ENCODE measurements at regions of chr3 and their contacts with region 1.

Region 1: GRCh38 chr3:170346481-170347392 is 10.8 kb upstream of the SKIL start:
- DNase-seq: no peak
- H3K4me3 ChIP-seq: no peak overlapping the region
- H3K27ac ChIP-seq: no peak overlapping the region
- H3K4me1 ChIP-seq: no peaks in the 10 kb centered on the region
- H3K27me3 ChIP-seq: no peaks in the 10 kb centered on the region
- CTCF ChIP-seq: no peak
- POLR2A ChIP-seq: no peak

Region 2: DNA sequence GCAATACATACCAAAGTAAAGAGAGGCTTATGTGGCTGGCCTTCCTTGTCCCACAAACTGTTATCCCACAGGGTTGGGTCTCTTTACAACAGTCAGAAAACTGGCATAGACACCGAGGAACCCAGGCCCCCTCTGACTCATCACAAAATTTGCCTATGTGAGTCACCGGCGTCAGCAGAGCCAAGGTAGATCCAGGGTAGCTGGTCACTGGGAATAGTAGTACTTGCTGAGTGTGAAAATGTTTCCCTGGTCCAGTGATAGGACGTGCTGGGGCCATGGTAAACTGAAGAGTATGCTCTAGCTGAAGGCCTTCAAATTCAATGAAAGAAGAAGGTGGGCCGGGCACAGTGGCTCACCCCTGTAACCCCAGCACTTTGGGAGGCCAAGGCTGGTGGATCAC is 16.4 kb before region 1 on chr3:
- intact Hi-C with region 1: loop called (anchors 1 kb)
- DNase-seq: no peak
- H3K4me3 ChIP-seq: no peak overlapping the region
- H3K27ac ChIP-seq: no peak overlapping the region
- H3K4me1 ChIP-seq: no peaks in the 10 kb centered on the region
- H3K27me3 ChIP-seq: no peaks in the 10 kb centered on the region
- CTCF ChIP-seq: no peak
- POLR2A ChIP-seq: no peak

Measured in breast epithelium (tissue), 4 donors.